GM23248 (cell line): ENCODE measurements at regions of chr17 and their contacts with region 1.

Region 1: GRCh38 chr17:19369846-19370492 is 7.4 kb upstream of the B9D1 start:
- DNase-seq: no peak
- H3K4me3 ChIP-seq: no peak overlapping the region
- H3K27ac ChIP-seq: no peak overlapping the region
- H3K4me1 ChIP-seq: no peaks in the 10 kb centered on the region
- H3K27me3 ChIP-seq: no peaks in the 10 kb centered on the region

Region 2: GRCh38 chr17:19453296-19453695 is 83.3 kb after region 1 on chr17:
- in situ Hi-C with region 1: loop called (anchors 5 kb)
- DNase-seq: no peak
- H3K4me3 ChIP-seq: no peak overlapping the region
- H3K27ac ChIP-seq: no peak overlapping the region
- H3K4me1 ChIP-seq: peaks cover 13% of the 10 kb centered on the region
- H3K27me3 ChIP-seq: peaks cover 13% of the 10 kb centered on the region; the same call in 1 of the 2 replicates

Region 3: GRCh38 chr17:19507775-19508576 is 138.0 kb after region 1 on chr17:
- in situ Hi-C with region 1: no loop called
- DNase-seq: peak; percentile 95
- H3K4me3 ChIP-seq: peak overlapping the region; percentile 84
- H3K27ac ChIP-seq: peak overlapping the region; percentile 57
- H3K4me1 ChIP-seq: no peaks in the 10 kb centered on the region
- H3K27me3 ChIP-seq: 0 out of 2 replicates have a peak, but pooled peaks cover 3% of the 10 kb centered on the region

Region 4: GRCh38 chr17:19876529-19877161 is 506.7 kb after region 1 on chr17:
- in situ Hi-C with region 1: no loop called
- DNase-seq: no peak
- H3K4me3 ChIP-seq: no peak overlapping the region
- H3K27ac ChIP-seq: no peak overlapping the region
- H3K4me1 ChIP-seq: no peaks in the 10 kb centered on the region
- H3K27me3 ChIP-seq: no peaks in the 10 kb centered on the region; the same call in none of the 2 replicates

Region 5: DNA sequence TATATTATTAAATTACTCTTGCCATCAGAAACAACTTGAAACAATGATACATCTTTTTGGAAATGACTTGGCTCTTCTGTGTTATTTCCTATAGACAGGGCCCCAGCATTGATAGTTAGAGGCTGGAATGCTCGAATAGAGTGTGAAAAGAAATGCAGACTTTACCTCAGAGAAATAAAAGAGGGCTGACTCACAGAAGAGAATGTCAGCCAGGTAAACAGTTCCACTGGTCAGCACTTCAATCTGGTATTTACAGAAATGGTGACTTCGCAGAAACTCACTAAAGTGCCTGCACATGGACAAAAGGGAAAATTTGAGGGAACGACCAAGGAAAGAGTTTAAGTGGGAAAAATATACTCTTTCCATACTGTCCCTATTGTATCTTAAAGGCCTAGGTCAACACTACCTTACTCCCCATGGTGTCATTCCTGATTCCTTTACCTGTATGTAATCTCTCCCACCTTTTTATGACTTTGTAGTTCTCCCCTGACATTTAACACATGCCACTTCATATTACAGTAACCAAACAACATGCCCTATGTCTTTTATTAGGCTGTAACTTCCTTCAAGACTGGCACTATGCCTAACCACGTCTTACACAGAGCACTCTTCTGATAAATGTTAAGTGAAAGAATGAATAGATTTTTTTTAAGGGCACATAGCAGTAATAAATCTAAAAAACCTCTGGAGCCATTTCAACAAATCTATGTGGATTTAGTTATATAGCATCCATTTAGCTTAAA is 570.9 kb after region 1 on chr17:
- in situ Hi-C with region 1: no loop called
- DNase-seq: peak; percentile 57
- H3K4me3 ChIP-seq: no peak overlapping the region
- H3K27ac ChIP-seq: peak overlapping the region; percentile 13; the same call in 1 of the 2 replicates
- H3K4me1 ChIP-seq: peaks cover 23% of the 10 kb centered on the region
- H3K27me3 ChIP-seq: no peaks in the 10 kb centered on the region